Head of caudate nucleus (tissue), 42 donors: ENCODE measurements at regions of chr20 and their contacts with region 1.

Region 1: DNA sequence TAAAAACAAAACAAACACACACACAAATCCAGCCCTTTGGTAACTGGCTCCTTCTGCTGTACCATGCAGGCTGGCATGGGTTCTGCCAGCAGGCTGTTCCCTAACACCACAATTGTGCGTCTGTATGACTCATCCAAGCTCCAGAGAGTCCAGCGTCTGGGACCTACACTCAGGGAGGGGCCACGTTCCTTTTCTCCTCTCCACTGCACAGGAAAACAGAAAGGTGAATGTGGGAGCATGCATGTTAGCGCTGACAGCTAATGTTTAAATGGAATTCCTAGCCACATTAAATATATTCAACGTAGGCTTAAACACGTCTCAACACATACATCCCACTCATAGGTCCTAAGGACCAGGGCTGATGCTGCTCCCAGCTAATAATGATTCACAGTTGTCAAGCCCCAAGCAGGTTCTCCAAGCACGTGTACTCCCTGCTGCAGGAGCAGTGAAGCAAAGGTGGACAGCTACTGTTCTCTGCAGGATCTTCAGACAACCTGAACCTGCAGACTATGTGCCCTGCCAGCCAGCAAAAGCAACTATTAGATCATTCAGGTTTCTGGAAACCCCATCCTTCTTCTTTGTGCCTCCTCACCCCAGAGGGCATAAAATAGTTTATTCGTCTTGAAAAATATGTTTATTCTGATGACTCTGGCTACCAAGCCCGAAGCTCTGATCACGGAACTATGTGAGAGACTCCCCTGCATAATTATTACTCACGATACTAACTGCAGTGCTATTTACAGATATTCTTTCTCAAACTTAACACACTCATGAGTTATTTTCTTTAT is 20.9 kb downstream of the MAP1LC3A start:
- DNase-seq: peak; percentile 64 to 94 (median 84)

Region 2: GRCh38 chr20:34704177-34705007 is 125.0 kb after region 1 on chr20 and contains the start of gene TP53INP2:
- intact Hi-C with region 1: loop called (anchors 5 kb)
- DNase-seq: peak; percentile 90 to 98 (median 94)

Region 3: GRCh38 chr20:34768096-34768495 is 188.7 kb after region 1 on chr20:
- intact Hi-C with region 1: loop called (anchors 5 kb)
- DNase-seq: no peak